ENCODE measurements at regions of chr20 and their contacts with region 1.

Region 1: DNA sequence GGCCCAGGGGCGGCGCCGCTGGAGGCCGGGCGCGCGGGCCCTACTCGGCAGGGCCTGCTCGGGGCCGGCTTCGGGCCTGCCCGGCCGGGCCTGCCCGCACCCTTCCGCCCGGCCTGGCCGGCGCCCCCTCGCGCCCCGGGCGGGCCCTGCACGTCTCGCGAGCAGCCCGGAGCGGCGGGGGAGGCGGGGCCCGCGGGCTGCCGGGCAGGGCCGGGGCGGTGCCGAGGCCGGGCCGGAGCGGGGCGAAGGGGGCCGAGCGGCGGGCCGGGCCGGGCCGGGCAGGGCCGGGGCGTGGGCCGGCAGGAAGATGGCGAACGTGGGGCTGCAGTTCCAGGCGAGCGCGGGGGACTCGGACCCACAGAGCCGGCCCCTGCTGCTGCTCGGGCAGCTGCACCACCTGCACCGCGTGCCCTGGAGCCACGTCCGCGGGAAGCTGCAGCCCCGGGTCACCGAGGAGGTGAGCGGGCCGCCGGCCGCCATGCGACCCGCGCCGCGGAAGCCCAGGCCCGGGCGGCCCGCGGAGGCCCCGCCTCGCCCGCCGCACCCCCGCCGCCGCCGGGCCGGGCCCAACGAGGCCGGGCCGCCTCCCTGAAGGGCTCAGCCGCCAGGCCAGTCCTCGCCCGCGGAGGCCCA is at the start of gene NPEPL1:
- DNase-seq: peak in 1 of 2 experiments; percentile 70
- H3K4me3 ChIP-seq: peak within 1 kb of the TSS; percentile 21 to 56 (median 36)
- H3K27ac ChIP-seq: peak within 1 kb of the TSS; percentile 13; the same call in 1 of the 2 replicates
- H3K4me1 ChIP-seq: peaks cover 3 to 28% (median 17%) of the 10 kb centered on the region in 4 experiments
- H3K27me3 ChIP-seq: no peaks in the 10 kb centered on the region
- CTCF ChIP-seq: peak; percentile 19 to 47 (median 34); a peak in 3 of 4 replicates
- EP300 ChIP-seq: no peak
- POLR2A ChIP-seq: no peak
- RAD21 ChIP-seq: peak in 1 of 2 experiments; percentile 44; a peak in 1 of 4 replicates
- total RNA-seq, gene NPEPL1: 26.7 and 26.8 TPM in 2 replicates

Region 2: DNA sequence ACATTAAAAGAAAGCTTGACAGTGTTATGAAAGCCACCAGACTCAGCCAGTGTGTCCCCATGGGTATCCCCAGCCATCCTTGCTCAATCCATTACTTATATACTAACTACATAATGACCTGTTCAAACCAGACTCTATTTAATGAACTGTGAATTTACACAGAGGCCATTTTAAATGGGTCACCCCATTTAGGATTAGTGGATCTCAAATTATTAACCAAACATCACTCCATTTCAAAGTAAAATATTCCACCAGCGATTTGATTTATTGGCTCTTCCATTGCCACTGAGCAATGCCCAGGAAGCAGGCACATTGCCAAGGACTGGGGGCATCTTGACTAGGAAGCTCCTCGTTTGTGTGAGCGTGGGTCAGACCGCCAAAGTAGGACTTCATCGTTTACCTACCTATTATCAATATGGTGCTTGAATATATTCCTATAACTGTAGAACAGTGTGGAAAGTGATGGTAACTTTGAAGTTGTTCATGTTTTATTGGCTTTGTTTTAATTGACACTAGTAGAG is 15.6 kb before region 1 on chr20:
- CTCF ChIA-PET with region 1: interaction called, 9 read pairs
- POLR2A ChIA-PET with region 1: interaction called, 28 read pairs
- DNase-seq: no peak
- H3K4me3 ChIP-seq: no peak overlapping the region
- H3K27ac ChIP-seq: no peak overlapping the region
- H3K4me1 ChIP-seq: peaks cover 2 to 9% (median 4%) of the 10 kb centered on the region in 4 experiments
- H3K27me3 ChIP-seq: no peaks in the 10 kb centered on the region
- CTCF ChIP-seq: no peak
- EP300 ChIP-seq: no peak
- POLR2A ChIP-seq: no peak
- RAD21 ChIP-seq: no peak

Region 3: GRCh38 chr20:58703264-58703663 is 10.6 kb after region 1 on chr20:
- CTCF ChIA-PET with region 1: interaction called, 11 read pairs
- POLR2A ChIA-PET with region 1: interaction called, 72 read pairs
- DNase-seq: peak in 1 of 2 experiments; percentile 47
- H3K4me3 ChIP-seq: no peak overlapping the region
- H3K27ac ChIP-seq: no peak overlapping the region
- H3K4me1 ChIP-seq: peaks cover 0 to 4% (median 1%) of the 10 kb centered on the region in 4 experiments; a peak in 1 of 7 replicates
- H3K27me3 ChIP-seq: no peaks in the 10 kb centered on the region
- CTCF ChIP-seq: peak; percentile 29 to 69 (median 53); a peak in 3 of 4 replicates
- EP300 ChIP-seq: no peak
- POLR2A ChIP-seq: no peak
- RAD21 ChIP-seq: peak; percentile 22 to 42; a peak in 2 of 4 replicates

Region 4: DNA sequence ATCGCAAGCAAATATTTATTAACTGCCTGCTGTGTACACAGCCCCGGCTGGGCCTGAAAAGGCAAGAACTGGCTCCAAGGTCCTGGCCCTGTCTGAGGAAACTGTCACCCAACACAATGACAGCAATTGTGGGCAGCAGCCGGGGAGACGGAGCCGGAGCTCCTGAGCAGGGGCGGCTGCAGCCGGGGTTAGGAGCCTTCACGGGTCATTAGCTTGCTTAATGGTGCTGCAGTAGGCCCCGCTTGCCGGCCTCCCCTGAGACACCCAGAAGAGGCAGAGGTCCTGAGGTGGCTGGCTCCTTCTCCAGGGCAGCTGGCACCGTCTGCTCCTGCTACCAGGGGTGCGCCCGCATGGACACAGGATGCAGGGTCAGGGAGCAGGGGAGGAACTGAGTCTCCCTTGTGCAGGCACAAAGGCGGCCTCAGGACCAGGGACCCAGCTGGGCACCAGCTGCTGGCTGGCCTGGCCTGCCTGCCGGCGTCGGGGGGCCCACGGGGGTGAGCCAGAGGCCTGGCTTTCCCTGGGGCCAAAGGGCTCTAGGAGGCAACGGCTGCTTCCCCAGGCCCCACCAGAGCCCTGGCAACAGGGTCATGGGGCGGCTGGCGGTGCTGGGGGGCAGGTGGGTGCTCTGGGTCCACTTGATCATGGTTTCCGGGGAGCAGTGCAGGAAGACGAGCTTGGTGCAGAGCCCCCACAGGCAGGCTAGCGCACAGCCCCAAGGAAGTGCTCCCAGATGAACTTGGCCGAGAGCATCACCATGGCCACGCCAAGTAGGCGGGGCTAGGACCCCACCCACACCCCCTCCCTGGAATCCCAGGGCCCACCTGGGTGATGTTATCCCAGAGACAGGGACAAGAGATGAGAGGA is 24.2 kb after region 1 on chr20:
- CTCF ChIA-PET with region 1: interaction called, 5 read pairs
- POLR2A ChIA-PET with region 1: interaction called, 188 read pairs
- DNase-seq: peak in 1 of 2 experiments; percentile 46
- H3K4me3 ChIP-seq: no peak overlapping the region
- H3K27ac ChIP-seq: no peak overlapping the region
- H3K4me1 ChIP-seq: peaks cover 0 to 4% (median 0%) of the 10 kb centered on the region in 4 experiments; a peak in 2 of 7 replicates
- H3K27me3 ChIP-seq: no peaks in the 10 kb centered on the region
- CTCF ChIP-seq: no peak
- EP300 ChIP-seq: no peak
- POLR2A ChIP-seq: no peak
- RAD21 ChIP-seq: no peak

Region 5: DNA sequence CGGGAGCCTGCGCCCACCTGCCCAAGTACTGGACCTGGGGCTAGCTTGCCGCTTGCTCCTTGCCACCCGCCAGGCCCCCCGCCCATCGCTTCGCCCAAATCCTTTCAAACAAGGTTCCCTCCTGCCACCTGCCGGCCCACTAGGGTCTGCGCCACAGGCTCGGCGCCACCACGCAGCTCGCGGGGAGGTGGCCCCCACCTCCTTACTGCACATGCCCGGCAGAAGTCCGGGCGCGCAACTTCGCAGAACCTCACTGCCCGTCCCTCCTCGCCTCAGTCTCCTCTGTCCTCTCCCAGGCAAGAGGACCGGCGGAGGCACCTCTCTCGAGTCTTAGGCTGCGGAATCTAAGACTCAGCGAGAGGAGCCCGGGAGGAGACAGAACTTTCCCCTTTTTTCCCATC is 146.8 kb after region 1 on chr20:
- CTCF ChIA-PET with region 1: interaction called, 5 read pairs
- POLR2A ChIA-PET with region 1: interaction called, 22 read pairs
- DNase-seq: peak in 1 of 2 experiments; percentile 71
- H3K4me3 ChIP-seq: peak overlapping the region; percentile 49 to 62 (median 60)
- H3K27ac ChIP-seq: no peak overlapping the region
- H3K4me1 ChIP-seq: peaks cover 9 to 21% (median 15%) of the 10 kb centered on the region in 4 experiments
- H3K27me3 ChIP-seq: peaks cover 0 to 18% (median 11%) of the 10 kb centered on the region in 4 experiments; a peak in 5 of 7 replicates
- CTCF ChIP-seq: peak; percentile 64 to 71 (median 67)
- EP300 ChIP-seq: no peak
- POLR2A ChIP-seq: peak in 1 of 2 experiments; percentile 27; a peak in 1 of 3 replicates
- RAD21 ChIP-seq: peak; percentile 71 to 85

Region 6: GRCh38 chr20:58907399-58908137 is 214.9 kb after region 1 on chr20:
- CTCF ChIA-PET with region 1: no interaction called
- POLR2A ChIA-PET with region 1: no interaction called
- DNase-seq: no peak
- H3K4me3 ChIP-seq: no peak overlapping the region
- H3K27ac ChIP-seq: no peak overlapping the region
- H3K4me1 ChIP-seq: no peaks in the 10 kb centered on the region
- H3K27me3 ChIP-seq: no peaks in the 10 kb centered on the region
- CTCF ChIP-seq: no peak
- EP300 ChIP-seq: no peak
- POLR2A ChIP-seq: peak in 1 of 2 experiments; percentile 27; a peak in 1 of 3 replicates
- RAD21 ChIP-seq: no peak

Region 7: DNA sequence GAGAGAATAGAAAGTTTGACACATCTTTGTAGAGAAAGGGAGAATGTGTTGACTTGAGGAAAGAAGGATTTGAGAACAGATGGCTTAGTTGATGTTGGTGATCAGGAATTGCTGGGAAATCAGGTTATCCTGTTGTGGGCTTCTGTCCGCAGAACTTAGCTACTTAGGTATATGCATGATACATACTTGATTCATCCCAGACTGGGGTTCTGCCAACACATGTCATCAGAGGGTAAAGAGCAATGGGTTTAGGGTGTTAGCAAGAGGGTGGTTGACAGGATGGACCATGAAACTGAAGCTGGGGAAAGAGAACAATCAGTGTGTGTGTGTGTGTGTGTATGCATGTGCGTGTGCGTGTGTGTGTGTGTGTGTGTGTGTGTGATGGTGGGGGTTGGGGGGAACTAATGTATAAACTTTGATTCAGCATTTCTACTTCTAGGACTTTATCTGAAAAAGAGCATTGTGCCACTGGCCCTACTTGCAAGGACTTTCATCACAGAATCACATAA is 237.8 kb after region 1 on chr20:
- CTCF ChIA-PET with region 1: no interaction called
- POLR2A ChIA-PET with region 1: no interaction called
- DNase-seq: no peak
- H3K4me3 ChIP-seq: no peak overlapping the region
- H3K27ac ChIP-seq: no peak overlapping the region
- H3K4me1 ChIP-seq: no peaks in the 10 kb centered on the region
- H3K27me3 ChIP-seq: no peaks in the 10 kb centered on the region; a peak in 1 of 7 replicates
- CTCF ChIP-seq: no peak
- EP300 ChIP-seq: no peak
- POLR2A ChIP-seq: no peak
- RAD21 ChIP-seq: no peak